ENCODE measurements at regions of chr7 and their contacts with region 1.

Region 1: GRCh38 chr7:55158541-55159382 is 139.9 kb downstream of the EGFR start:
- DNase-seq: no peak
- ATAC-seq: no peak
- H3K4me3 ChIP-seq: no peak overlapping the region
- H3K27ac ChIP-seq: no peak overlapping the region
- H3K4me1 ChIP-seq: peaks cover 0 to 6% of the 10 kb centered on the region in 2 experiments; a peak in 1 of 5 replicates
- H3K27me3 ChIP-seq: peaks cover 20 to 49% of the 10 kb centered on the region in 2 experiments
- CTCF ChIP-seq: no peak
- EP300 ChIP-seq: no peak
- POLR2A ChIP-seq: no peak
- RAD21 ChIP-seq: no peak

Region 2: GRCh38 chr7:55144333-55145317 is 14.1 kb before region 1 on chr7:
- CTCF ChIA-PET with region 1: no interaction called
- POLR2A ChIA-PET with region 1: no interaction called
- in situ Hi-C with region 1: no loop called
- intact Hi-C with region 1: no loop called
- DNase-seq: peak; percentile 27 to 41 (median 39)
- ATAC-seq: peak; percentile 89
- H3K4me3 ChIP-seq: no peak overlapping the region
- H3K27ac ChIP-seq: no peak overlapping the region
- H3K4me1 ChIP-seq: peaks cover 0 to 7% of the 10 kb centered on the region in 2 experiments; a peak in 1 of 5 replicates
- H3K27me3 ChIP-seq: peaks cover 4 to 39% of the 10 kb centered on the region in 2 experiments; a peak in 4 of 5 replicates
- CTCF ChIP-seq: peak; percentile 31 to 53 (median 47)
- EP300 ChIP-seq: no peak
- POLR2A ChIP-seq: no peak
- RAD21 ChIP-seq: peak in 1 of 2 experiments; percentile 30; a peak in 1 of 4 replicates

Region 3: DNA sequence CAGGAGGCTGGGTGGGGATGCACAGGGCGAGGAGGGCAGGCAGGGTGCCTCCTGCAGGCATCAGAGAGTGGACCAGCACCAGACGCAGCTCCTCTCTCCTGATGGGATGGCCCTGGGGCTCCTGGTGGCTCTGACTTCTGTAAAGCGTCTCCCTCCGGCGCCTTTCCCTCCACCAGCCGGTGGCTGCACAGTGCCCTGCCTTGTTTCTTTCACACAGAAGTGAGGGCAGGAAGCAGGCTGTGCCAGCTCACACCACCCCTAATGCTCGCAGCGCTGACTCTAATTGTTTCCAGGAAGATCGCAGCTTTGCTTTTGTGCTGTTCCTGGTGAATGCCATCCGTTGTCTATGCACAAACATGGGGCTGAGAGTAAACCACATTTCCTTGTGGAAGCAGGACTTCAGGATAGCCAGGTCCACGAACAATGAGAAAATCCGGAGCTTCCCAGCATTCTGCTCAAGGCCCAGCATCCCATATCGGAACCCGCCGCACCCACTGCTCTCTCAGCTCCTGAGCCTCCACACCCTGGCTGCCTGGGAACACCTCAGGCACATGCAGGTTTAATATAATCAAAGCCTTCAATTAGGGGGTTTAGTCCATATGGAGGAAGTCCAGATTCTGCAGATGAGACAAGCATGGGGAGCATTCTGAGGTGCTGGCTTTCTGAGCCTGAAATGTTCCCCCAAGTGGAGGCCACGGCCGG is 54.2 kb after region 1 on chr7:
- CTCF ChIA-PET with region 1: no interaction called
- POLR2A ChIA-PET with region 1: no interaction called
- in situ Hi-C with region 1: no loop called
- intact Hi-C with region 1: loop called (anchors 10 kb)
- DNase-seq: no peak
- ATAC-seq: no peak
- H3K4me3 ChIP-seq: no peak overlapping the region
- H3K27ac ChIP-seq: no peak overlapping the region
- H3K4me1 ChIP-seq: no peaks in the 10 kb centered on the region
- H3K27me3 ChIP-seq: peaks cover 11 to 28% of the 10 kb centered on the region in 2 experiments; a peak in 3 of 5 replicates
- CTCF ChIP-seq: no peak
- EP300 ChIP-seq: no peak
- POLR2A ChIP-seq: no peak
- RAD21 ChIP-seq: no peak

Measured in K562 (cell line).